ENCODE measurements at regions of chr17 and their contacts with region 1.

Region 1: DNA sequence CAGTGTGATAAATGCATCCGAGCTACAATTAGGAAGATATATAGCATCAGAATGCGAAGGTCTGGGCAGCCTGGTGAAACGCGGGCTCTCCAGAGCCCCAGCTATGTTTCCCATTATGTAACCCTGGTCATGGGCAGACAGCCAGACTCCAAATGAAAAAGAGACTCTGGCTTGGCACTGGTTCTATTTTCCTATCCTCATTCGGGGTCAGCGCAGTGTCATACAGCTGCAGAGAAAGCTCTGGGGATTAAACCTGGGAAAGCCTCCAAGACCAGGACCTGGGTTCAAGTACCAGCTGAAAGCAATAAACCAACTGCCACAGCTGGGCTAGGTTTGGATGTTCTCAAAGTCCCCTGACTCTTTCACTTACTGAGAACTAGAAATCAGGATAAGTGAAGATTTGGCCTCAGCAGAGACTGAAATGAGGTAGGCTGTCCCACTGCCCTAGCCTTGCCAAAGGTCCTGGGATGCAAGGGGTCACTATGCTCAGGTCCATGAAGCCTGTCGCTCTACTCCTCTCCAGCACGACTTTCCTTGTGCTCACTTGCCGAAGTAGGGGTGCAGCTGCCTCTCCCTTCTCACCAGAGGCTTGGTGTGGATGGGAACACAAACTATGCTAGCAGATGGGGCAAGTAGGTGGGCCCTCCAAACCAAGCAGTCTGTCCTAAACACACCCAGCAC is 123.8 kb downstream of the SMG6 start:
- DNase-seq: peak; percentile 88

Region 2: GRCh38 chr17:2064980-2065785 is 114.6 kb before region 1 on chr17:
- intact Hi-C with region 1: loop called in 1 of 2 experiments (anchors 5 kb)
- DNase-seq: peak; percentile 90

Region 3: GRCh38 chr17:2151358-2152033 is 28.3 kb before region 1 on chr17:
- intact Hi-C with region 1: no loop called
- DNase-seq: no peak

Region 4: DNA sequence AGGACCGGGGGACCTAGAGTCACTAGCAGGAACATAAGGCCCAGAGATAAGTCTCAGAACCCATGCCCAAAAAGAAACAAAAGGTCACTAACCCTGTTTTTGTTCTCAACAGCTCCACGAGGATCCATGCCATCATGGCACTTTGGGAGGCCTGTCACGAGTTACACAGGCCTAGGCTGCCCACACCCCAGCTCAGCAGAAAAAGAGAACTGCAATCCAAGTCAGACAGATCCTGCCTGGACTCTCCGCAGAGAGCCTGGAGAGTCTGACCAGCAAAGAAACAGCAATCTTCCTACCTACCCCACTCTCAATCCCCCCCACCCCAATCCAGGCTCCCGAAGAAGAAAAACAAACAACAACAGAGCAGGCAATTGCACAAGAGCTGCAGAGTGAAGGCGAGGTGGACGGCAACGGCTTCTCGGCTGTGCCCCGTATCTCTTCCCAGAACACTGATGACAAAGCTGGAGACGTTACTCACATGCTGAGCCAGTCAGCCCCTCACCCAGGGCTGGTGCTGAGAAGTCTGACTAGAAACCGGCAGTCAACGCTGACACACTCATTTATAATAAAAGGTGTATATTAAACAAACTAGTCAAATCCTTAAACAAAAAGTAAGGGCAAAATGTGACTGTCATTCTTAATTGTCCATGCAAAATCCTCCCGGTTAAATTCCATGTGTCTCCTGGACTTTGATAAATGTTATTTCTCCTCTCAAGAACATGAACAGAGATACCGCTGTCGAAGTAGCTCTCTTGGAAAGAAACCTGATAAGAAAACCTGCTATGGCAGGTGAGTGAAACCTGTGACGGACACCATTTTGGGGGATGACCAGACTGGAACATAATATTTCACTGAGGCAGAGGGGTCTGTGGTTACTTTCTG is 34.5 kb after region 1 on chr17:
- intact Hi-C with region 1: loop called (anchors 5 kb)
- DNase-seq: peak; percentile 86

Region 5: GRCh38 chr17:2571523-2572303 is 392.0 kb after region 1 on chr17:
- intact Hi-C with region 1: no loop called
- DNase-seq: peak; percentile 6

Region 6: DNA sequence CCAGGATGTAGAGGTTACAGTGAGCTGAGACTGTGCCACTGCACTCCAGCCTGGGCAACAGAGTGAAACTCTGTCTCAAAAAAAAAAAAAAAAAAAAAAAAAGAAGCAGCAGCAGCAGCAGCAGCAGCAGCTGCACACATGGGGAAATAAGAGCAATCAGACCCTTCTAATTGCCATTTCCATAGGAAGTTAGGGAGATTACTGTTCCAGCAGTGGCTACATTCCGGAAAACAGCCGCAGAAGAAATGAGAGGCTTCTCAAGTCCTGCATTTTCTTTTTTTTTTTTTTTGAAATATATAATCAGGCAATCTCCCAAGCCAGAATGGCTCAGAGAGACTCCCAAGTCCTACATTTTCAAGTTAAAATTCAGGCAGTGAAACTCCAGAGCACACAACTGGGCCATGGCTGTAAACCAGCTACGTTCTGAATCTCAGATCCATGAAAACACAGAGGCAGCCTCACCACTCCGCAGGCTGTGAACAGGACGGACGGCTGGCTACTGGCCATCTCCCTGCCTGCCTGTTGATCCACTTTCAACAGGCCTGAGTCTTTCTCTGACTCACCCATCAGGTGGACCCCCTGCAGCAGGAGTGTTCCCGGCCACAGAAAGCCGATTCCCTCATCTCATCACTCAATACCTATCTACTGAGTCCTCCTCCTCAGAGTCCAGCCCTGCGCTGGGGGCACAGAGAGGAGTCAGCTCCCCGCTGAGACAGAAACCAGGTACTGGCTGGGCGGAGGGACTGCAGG is 1414.5 kb after region 1 on chr17:
- intact Hi-C with region 1: no loop called
- DNase-seq: no peak